ENCODE measurements at regions of chr22 and their contacts with region 1.

Region 1: DNA sequence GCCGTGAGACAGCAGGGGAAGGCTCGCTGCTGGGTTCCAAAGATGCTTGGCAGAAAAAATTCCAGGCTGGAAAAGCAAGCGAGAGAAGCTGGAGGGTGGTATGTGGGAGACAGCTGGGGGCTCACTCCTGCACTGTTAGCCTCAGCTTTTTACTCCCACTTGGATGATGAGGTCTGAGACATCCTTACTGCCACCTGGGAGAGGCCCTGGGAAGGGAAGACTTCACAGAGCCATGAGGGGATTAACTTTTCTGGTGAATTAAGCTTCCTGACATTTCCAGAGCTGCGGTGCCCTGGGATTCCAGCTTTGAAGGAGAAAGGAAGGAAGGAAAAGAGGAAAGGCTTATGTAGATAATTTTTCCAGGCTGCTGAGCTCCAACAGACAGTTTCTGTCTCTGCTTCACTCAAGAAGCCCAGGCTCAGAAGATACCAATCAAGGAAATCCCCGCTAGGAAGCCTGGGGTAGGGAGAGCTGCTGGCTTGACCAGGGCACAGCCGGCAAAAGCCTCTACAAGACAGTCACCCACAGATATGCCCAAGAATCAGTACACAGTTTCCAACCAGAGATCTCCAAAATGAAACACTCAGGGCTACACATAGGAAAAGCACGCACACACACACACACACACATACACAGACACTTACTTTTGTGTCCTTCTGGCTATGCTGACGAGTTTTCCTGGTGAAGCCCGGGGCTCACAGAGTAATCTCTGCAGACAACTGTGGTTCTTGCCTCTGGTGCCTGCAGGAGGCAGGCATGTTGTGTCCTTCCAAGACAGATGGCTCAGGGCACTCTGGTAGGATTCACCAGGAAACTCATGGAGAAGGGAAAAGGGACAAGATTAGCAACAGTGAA is 907 bp downstream of the MCHR1 start:
- DNase-seq: no peak
- H3K4me3 ChIP-seq: peak overlapping the region in 1 of 4 experiments; percentile 32; a peak in 2 of 8 replicates
- H3K27ac ChIP-seq: no peak overlapping the region
- H3K4me1 ChIP-seq: peaks cover 8 to 39% (median 23%) of the 10 kb centered on the region in 4 experiments
- H3K27me3 ChIP-seq: no peaks in the 10 kb centered on the region
- CTCF ChIP-seq: peak; percentile 13 to 38 (median 29); a peak in 3 of 4 replicates
- EP300 ChIP-seq: no peak
- POLR2A ChIP-seq: no peak
- RAD21 ChIP-seq: peak; percentile 41 to 58

Region 2: GRCh38 chr22:40572976-40573375 is 107.2 kb before region 1 on chr22:
- CTCF ChIA-PET with region 1: no interaction called
- POLR2A ChIA-PET with region 1: no interaction called
- DNase-seq: no peak
- H3K4me3 ChIP-seq: no peak overlapping the region
- H3K27ac ChIP-seq: no peak overlapping the region
- H3K4me1 ChIP-seq: no peaks in the 10 kb centered on the region
- H3K27me3 ChIP-seq: no peaks in the 10 kb centered on the region
- CTCF ChIP-seq: no peak
- EP300 ChIP-seq: no peak
- POLR2A ChIP-seq: no peak
- RAD21 ChIP-seq: no peak

Region 3: DNA sequence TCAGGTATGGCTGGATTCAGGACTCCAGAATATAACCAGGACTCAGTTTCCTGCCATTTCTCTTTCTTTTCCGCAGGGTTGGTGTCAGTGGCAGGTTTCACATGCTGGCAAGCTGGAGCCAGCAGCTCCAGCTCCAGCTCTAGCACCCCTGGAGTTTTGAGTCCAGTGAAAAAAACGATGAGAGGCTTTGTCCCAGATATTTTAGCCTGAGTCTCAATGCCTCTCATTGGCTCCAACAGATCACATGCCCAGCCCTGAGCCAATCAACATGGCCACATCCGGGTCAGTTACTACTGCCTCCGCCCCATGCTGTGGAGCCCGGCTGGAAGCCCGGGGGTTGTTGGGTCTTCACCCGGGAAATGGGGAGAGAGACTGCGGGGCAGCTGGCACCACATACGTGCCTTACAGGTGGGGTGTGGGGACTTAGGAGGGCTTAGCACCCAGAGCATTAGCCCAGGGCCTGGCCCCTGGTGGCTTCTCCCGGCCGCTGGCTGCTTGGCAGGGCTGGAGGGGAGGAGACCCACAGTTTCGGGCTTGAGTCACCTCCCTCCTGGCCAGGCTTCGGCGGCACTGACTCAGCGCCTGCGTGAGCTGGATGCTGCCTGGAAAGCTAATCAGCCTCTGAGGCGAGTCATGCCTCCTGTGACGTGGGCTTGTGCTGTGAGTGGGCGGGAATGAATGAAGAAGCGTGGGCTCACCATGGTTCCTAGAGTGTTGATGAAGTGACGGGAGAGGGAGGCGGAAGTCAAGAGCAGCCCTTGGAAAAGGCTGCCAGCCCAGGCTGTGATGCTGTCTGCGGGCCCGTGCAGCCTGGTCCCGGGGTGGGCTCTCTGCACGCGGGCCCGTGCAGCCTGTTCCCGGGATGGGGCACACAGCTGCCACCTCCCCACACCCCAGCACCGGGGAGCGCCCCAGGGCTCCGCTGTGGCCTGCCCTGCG is 28.4 kb before region 1 on chr22:
- CTCF ChIA-PET with region 1: interaction called, 20 read pairs
- POLR2A ChIA-PET with region 1: interaction called, 3 read pairs
- DNase-seq: peak; percentile 58 to 78
- H3K4me3 ChIP-seq: 0 out of 8 replicates have a peak overlapping the region, but pooled peaks of 1 of the 4 experiments have one; percentile 6
- H3K27ac ChIP-seq: no peak overlapping the region
- H3K4me1 ChIP-seq: peaks cover 0 to 5% (median 2%) of the 10 kb centered on the region in 4 experiments; a peak in 3 of 7 replicates
- H3K27me3 ChIP-seq: no peaks in the 10 kb centered on the region
- CTCF ChIP-seq: no peak
- EP300 ChIP-seq: no peak
- POLR2A ChIP-seq: no peak
- RAD21 ChIP-seq: no peak

Region 4: GRCh38 chr22:40714192-40714951 is 34.2 kb after region 1 on chr22:
- CTCF ChIA-PET with region 1: interaction called, 9 read pairs
- POLR2A ChIA-PET with region 1: interaction called, 14 read pairs
- DNase-seq: peak in 1 of 2 experiments; percentile 72
- H3K4me3 ChIP-seq: peak overlapping the region in 3 of 4 experiments; percentile 14 to 37 (median 17); a peak in 2 of 8 replicates
- H3K27ac ChIP-seq: peak overlapping the region; percentile 67
- H3K4me1 ChIP-seq: peaks cover 2 to 10% (median 7%) of the 10 kb centered on the region in 4 experiments; a peak in 5 of 7 replicates
- H3K27me3 ChIP-seq: no peaks in the 10 kb centered on the region
- CTCF ChIP-seq: no peak
- EP300 ChIP-seq: no peak
- POLR2A ChIP-seq: no peak
- RAD21 ChIP-seq: no peak

Region 5: GRCh38 chr22:40757071-40757470 is 76.9 kb after region 1 on chr22:
- CTCF ChIA-PET with region 1: interaction called, 19 read pairs
- POLR2A ChIA-PET with region 1: interaction called, 12 read pairs
- DNase-seq: no peak
- H3K4me3 ChIP-seq: no peak overlapping the region
- H3K27ac ChIP-seq: no peak overlapping the region
- H3K4me1 ChIP-seq: peaks cover 0 to 8% (median 2%) of the 10 kb centered on the region in 4 experiments; a peak in 2 of 7 replicates
- H3K27me3 ChIP-seq: no peaks in the 10 kb centered on the region
- CTCF ChIP-seq: no peak
- EP300 ChIP-seq: no peak
- POLR2A ChIP-seq: no peak
- RAD21 ChIP-seq: no peak

Measured in H1 (cell line).